Tibial artery (tissue), 4 donors: ENCODE measurements at regions of chr15 and their contacts with region 1.

Region 1: DNA sequence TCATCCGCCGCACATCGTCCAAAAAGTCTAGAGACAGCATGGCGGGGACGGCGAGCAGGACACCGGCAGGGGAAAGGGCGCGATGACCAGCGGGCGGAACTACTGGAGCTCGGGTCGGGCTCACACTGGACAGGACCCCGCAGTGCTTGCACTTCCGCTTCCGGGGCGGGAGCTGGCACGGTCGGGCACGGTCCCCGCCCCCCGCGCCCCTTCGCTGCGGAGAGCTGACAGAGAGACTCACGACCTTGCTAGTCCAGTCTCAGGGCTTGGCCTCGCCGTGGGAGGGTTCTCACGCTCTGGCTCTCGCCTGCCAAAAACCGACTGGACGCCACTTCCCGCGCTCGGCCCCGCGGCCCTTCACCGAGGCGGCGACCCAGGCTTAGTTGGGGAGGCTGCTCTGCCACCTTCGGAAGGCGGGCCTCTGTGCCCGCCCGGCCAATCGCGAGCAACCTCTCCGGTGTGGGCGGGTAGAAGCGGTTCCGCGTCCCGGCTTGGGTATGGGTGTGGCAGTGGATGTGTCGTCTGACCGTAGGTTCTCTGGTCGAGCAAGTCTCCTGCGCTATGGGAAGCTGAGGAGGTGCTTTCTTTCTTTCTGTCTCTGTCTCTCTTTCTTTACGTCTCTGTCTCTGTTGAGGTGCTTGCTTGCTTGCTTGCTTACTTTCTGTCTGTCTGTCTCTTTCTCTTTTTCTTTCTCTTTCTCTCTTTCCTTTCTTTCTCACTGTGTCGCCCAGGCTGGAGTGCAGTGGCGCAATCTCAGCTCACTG is at the start of gene SEC11A:
- DNase-seq: peak; percentile 96 to 98
- H3K4me3 ChIP-seq: peak within 1 kb of the TSS; percentile 86 to 87
- H3K27ac ChIP-seq: peak within 1 kb of the TSS; percentile 87 to 90
- H3K4me1 ChIP-seq: peaks cover 0 to 32% (median 20%) of the 10 kb centered on the region in 4 donors
- H3K27me3 ChIP-seq: no peaks in the 10 kb centered on the region
- CTCF ChIP-seq: no peak

Region 2: DNA sequence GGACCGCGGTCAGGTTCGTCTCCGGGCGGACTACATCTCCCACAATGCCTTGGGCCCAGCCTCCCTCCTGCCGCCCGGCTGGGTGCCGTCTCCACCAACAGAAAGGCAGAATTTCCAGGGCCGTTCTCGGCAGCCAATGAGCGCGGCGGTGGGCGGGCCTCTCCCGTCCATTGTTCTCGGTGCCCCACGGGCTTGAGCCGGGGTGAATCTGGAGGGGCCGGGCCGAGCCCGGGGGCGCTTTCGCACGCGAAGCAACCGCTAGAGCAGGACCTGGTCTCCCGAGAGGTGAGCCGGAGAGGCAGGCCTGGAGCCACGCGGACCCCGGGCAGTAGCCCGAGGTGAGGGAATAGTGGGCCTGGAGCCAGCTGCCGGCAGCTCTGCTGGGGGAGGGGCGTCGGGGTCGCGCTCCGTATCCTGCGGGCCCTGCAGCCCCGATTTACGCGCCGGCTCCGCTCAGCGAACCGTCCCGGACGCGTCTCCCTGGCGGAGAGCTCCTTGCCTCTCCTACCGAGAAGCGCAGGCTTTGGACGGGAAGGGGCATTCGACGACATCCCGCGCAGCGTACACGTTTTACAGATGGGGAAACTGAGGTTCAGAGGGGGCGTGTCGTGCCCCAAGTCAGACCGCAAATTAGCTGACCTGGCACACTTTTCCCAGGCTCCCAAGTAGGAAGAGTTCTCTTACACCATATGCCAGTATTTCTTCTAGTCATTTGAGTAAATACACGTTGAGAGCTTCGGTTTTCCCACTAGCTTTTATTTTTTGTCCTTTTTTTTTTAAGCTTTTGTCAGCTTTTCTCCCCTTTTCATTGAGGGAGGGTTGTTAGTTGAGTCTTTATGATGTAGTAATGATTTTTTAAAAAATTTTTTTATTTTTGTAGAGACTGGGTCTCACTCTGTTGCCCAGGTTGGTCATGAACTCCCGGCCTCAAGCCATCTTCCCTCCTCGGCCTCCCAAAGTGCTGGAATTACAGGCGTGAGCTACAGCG is 115.1 kb before region 1 on chr15 and contains the start of gene ZSCAN2:
- intact Hi-C with region 1: loop called (anchors 10 kb)
- DNase-seq: peak; percentile 96 to 97
- H3K4me3 ChIP-seq: peak within 1 kb of the TSS; percentile 88 to 96
- H3K27ac ChIP-seq: peak within 1 kb of the TSS; percentile 67 to 68
- H3K4me1 ChIP-seq: peaks cover 0 to 16% (median 5%) of the 10 kb centered on the region in 4 donors
- H3K27me3 ChIP-seq: no peaks in the 10 kb centered on the region
- CTCF ChIP-seq: no peak

Region 3: GRCh38 chr15:84748274-84749110 is 32.3 kb after region 1 on chr15 and contains the start of gene ZNF592:
- intact Hi-C with region 1: loop called (anchors 2 kb)
- DNase-seq: peak; percentile 76 to 93
- H3K4me3 ChIP-seq: peak within 1 kb of the TSS; percentile 89 to 93
- H3K27ac ChIP-seq: peak within 1 kb of the TSS; percentile 96 to 100
- H3K4me1 ChIP-seq: peaks cover 0 to 65% (median 45%) of the 10 kb centered on the region in 4 donors
- H3K27me3 ChIP-seq: no peaks in the 10 kb centered on the region
- CTCF ChIP-seq: peak in 1 of 2 experiments; percentile 84

Region 4: DNA sequence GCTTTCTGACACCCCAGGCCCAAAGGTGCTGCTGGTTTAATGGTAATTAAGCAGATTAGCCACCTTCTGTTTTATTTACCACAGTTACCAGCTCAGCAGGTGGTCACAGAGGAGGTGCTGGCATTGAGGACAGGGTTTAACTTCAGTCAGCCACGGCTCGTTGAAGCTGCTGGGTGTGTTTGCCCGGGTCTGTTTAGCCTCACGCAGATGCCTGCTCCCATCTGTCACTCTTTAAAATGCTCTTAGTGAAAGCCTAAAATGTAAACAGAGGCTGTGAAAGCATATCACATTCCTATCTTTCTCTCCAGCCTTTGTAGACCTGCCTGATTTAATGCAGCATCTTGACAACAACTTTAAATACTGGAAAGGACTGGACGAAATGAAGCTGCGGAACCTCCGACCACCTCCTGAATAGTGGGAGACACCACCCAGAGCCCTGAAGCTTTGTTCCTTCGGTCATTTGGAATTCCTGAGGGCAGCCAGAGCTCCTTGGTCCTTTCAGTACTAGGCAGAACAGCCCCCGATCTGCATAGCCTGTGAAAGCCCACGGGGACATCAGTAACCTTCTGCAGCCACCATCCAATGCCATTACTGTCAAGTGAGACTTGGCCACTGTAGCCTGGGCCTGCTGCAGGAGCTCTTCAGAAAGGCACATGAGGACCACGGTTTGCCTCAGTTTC is 421.4 kb after region 1 on chr15:
- intact Hi-C with region 1: no loop called
- DNase-seq: no peak
- H3K4me3 ChIP-seq: no peak overlapping the region
- H3K27ac ChIP-seq: no peak overlapping the region
- H3K4me1 ChIP-seq: peaks cover 0 to 10% (median 3%) of the 10 kb centered on the region in 4 donors
- H3K27me3 ChIP-seq: no peaks in the 10 kb centered on the region
- CTCF ChIP-seq: no peak